ENCODE measurements at regions of chr22 and their contacts with region 1.

Region 1: GRCh38 chr22:30386960-30387827 is at the start of gene RNF215:
- DNase-seq: peak; percentile 87
- ATAC-seq: peak; percentile 77
- H3K4me3 Mint-ChIP-seq: peak within 1 kb of the TSS; percentile 73
- H3K27ac Mint-ChIP-seq: peak within 1 kb of the TSS; percentile 9
- H3K4me1 Mint-ChIP-seq: peaks cover 15% of the 10 kb centered on the region
- H3K27me3 Mint-ChIP-seq: no peaks in the 10 kb centered on the region
- total RNA-seq, gene RNF215: 4.3 to 7.4 TPM

Region 2: GRCh38 chr22:30262917-30263741 is 124.1 kb before region 1 on chr22:
- CTCF ChIA-PET with region 1: interaction called, 9 read pairs
- POLR2A ChIA-PET with region 1: no interaction called
- intact Hi-C with region 1: loop called in 1 of 2 experiments (anchors 1 kb)
- DNase-seq: peak; percentile 88
- ATAC-seq: no peak
- H3K4me3 Mint-ChIP-seq: peak overlapping the region; percentile 62
- H3K27ac Mint-ChIP-seq: peak overlapping the region; percentile 51
- H3K4me1 Mint-ChIP-seq: peaks cover 33% of the 10 kb centered on the region
- H3K27me3 Mint-ChIP-seq: no peaks in the 10 kb centered on the region

Region 3: DNA sequence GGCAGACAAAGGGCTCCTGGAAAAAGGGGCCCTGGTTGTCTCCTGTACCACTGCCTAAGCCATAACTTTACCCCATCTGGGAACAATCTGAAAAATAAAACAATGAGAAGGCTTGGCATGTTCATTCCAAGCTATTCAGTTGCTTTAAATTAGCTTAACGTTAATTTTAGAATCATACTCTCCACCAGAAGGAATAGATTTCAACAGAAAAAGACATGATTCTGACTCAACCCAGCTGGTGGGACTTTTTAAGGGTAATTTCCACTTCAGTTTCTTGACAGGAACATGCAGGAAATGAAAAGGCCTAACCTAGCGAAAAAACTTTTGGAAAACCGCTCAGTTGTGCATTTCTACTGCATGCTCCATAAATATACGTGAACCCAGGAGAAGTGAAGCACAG is 38.4 kb before region 1 on chr22:
- CTCF ChIA-PET with region 1: interaction called, 6 read pairs
- POLR2A ChIA-PET with region 1: no interaction called
- intact Hi-C with region 1: loop called in 1 of 2 experiments (anchors 5 kb)
- DNase-seq: no peak
- ATAC-seq: no peak
- H3K4me3 Mint-ChIP-seq: peak overlapping the region; percentile 47
- H3K27ac Mint-ChIP-seq: peak overlapping the region; percentile 90
- H3K4me1 Mint-ChIP-seq: peaks cover 86% of the 10 kb centered on the region
- H3K27me3 Mint-ChIP-seq: no peaks in the 10 kb centered on the region

Region 4: DNA sequence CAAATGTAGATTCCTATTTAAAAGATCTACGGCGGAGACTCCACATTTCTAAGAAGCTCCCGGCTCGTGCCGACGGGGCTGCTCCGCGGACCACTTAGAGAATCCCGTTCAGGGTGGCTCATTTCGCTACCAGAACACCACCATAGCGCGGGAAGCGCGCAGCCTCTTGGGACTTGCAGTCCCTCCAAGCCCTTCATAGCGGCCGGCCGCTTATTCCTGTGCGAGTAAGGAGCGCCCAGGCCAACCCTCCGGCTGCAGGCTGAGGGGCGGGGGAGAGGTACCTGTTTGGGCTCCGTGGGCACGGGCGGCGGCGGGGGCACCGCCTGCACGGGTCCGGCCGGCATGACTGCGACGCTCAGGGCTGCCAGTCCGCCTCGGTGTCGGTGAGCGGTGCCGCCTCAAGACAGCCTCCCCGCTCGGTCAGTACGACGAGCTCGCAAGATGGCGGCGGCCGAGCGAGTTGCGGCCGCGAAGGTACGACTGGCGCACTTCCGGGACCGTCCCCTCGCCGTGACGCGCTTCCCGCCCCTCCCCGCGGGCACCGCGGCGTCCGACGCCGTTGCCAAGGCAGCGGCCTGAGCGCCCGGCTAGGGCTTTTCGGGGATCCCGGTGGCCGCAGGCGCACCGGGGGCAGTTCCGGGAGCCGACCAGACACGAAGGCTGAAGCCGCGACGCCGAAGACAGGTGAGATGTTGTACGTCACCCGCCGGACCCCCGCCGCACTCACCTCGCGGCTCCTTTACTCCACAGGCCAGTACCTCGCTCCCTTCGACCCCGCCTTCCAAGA is 30.6 kb before region 1 on chr22 and contains the starts of genes CCDC157 and SF3A1:
- CTCF ChIA-PET with region 1: interaction called, 9 read pairs
- POLR2A ChIA-PET with region 1: interaction called, 4 read pairs
- intact Hi-C with region 1: loop called in 1 of 2 experiments (anchors 1 kb)
- DNase-seq: peak; percentile 94
- ATAC-seq: peak; percentile 93
- H3K4me3 Mint-ChIP-seq: peak within 1 kb of the TSS; percentile 92
- H3K27ac Mint-ChIP-seq: peak within 1 kb of the TSS; percentile 90
- H3K4me1 Mint-ChIP-seq: peaks cover 48% of the 10 kb centered on the region
- H3K27me3 Mint-ChIP-seq: no peaks in the 10 kb centered on the region
- total RNA-seq, gene CCDC157: 2.4 to 3.7 TPM
- total RNA-seq, gene SF3A1: 254 to 499 TPM

Region 5: GRCh38 chr22:30485362-30485988 is 98.3 kb after region 1 on chr22:
- CTCF ChIA-PET with region 1: interaction called, 80 read pairs
- POLR2A ChIA-PET with region 1: no interaction called
- intact Hi-C with region 1: loop called (anchors 1 kb)
- DNase-seq: peak; percentile 86
- ATAC-seq: peak; percentile 100
- H3K4me3 Mint-ChIP-seq: no peak overlapping the region
- H3K27ac Mint-ChIP-seq: no peak overlapping the region
- H3K4me1 Mint-ChIP-seq: no peaks in the 10 kb centered on the region
- H3K27me3 Mint-ChIP-seq: no peaks in the 10 kb centered on the region

Region 6: GRCh38 chr22:30606455-30607299 is 219.5 kb after region 1 on chr22 and contains the start of gene TCN2:
- CTCF ChIA-PET with region 1: interaction called, 5 read pairs
- POLR2A ChIA-PET with region 1: no interaction called
- intact Hi-C with region 1: loop called in 1 of 2 experiments (anchors 10 kb)
- DNase-seq: peak; percentile 73
- ATAC-seq: peak; percentile 69
- H3K4me3 Mint-ChIP-seq: peak within 1 kb of the TSS; percentile 52
- H3K27ac Mint-ChIP-seq: peak within 1 kb of the TSS; percentile 55
- H3K4me1 Mint-ChIP-seq: peaks cover 30% of the 10 kb centered on the region
- H3K27me3 Mint-ChIP-seq: peaks cover 2% of the 10 kb centered on the region
- total RNA-seq, gene TCN2: 0.12 to 0.32 TPM

Measured in activated CD4-positive, alpha-beta T cell treated with anti-CD3 and anti-CD28 coated beads for 36 hours (primary cell).